Activated CD4-positive, alpha-beta T cell treated with anti-CD3 and anti-CD28 coated beads for 36 hours (primary cell): ENCODE measurements at regions of chr19 and their contacts with region 1.

Region 1: DNA sequence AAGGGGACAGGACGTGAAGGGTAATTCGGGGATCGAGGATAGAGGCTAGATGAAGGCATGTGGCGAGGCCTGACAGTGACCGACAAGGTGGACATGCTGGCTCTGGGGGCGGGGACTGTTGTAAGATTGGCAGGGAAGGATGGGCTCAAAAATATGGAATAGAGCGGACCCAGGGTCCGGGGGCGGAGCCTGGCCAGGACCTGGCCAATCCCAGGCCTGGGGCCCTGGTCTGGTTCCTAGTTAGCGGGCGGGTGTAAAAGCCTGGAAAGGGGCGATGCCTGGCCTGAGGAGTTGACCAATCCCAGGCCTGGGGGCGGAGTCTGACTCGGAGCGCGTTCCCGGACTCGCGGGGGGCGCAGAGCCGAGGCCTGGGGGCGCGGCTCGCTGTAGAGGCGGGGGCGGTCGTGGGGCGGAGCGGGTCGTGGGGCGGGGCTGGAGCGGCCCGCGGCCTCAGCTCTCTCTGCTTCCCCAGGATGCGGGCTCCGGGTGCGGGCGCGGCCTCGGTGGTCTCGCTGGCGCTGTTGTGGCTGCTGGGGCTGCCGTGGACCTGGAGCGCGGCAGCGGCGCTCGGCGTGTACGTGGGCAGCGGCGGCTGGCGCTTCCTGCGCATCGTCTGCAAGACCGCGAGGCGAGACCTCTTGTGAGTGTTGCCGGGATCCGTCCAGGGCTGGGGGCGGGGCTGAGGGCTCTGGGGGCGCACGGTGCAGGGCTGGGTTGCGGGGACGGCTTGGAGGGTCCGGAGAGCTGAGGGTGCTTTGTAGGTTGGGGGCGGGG is at the start of gene SLC27A1:
- DNase-seq: peak; percentile 93
- ATAC-seq: peak; percentile 90
- H3K4me3 Mint-ChIP-seq: peak within 1 kb of the TSS; percentile 86
- H3K27ac Mint-ChIP-seq: peak within 1 kb of the TSS; percentile 91
- H3K4me1 Mint-ChIP-seq: peaks cover 25% of the 10 kb centered on the region
- H3K27me3 Mint-ChIP-seq: no peaks in the 10 kb centered on the region
- total RNA-seq, gene SLC27A1: 2.2 to 2.7 TPM

Region 2: DNA sequence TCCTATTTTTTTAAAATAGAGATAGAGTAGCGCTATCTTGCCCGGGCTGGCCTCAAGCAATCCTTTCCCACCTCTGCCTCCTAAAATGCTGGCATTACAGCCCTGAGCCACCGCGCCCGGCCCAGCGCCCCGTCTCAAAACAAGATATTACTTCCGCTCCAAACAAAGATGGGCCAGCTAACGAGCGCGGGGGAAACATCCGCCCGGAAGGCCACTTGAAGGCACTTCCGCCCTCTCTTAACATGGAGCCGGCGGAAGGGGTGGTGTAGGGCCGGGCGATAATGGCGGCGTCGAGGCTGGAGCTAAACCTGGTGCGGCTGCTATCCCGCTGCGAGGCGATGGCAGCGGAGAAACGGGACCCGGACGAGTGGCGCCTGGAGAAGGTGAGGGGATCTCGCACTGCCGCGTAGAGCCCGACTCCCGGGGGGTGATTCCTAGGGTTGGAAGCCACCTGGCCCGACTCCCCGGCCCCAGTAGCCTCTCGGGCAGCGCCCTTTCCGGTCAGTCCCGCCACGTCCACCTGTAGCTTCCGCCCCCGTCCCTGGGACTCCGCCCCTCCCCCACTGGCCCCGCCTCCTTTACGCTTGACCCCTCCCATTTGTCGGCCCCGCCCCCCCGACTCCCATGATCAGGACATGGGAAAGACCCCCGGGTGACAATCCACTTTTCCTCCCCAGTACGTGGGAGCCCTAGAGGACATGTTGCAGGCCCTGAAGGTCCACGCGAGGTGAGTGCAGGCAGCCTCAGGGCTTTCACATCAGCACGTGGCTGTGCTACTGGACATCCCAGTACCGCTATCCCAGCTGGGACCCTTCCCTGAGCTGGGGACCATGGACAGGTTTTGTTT is 254.9 kb before region 1 on chr19 and contains the start of gene USE1:
- CTCF ChIA-PET with region 1: no interaction called
- POLR2A ChIA-PET with region 1: no interaction called
- intact Hi-C with region 1: no loop called
- DNase-seq: peak; percentile 93
- ATAC-seq: peak; percentile 97
- H3K4me3 Mint-ChIP-seq: peak within 1 kb of the TSS; percentile 80
- H3K27ac Mint-ChIP-seq: peak within 1 kb of the TSS; percentile 95
- H3K4me1 Mint-ChIP-seq: peaks cover 21% of the 10 kb centered on the region
- H3K27me3 Mint-ChIP-seq: no peaks in the 10 kb centered on the region
- total RNA-seq, gene USE1: 22.6 to 24.5 TPM

Region 3: DNA sequence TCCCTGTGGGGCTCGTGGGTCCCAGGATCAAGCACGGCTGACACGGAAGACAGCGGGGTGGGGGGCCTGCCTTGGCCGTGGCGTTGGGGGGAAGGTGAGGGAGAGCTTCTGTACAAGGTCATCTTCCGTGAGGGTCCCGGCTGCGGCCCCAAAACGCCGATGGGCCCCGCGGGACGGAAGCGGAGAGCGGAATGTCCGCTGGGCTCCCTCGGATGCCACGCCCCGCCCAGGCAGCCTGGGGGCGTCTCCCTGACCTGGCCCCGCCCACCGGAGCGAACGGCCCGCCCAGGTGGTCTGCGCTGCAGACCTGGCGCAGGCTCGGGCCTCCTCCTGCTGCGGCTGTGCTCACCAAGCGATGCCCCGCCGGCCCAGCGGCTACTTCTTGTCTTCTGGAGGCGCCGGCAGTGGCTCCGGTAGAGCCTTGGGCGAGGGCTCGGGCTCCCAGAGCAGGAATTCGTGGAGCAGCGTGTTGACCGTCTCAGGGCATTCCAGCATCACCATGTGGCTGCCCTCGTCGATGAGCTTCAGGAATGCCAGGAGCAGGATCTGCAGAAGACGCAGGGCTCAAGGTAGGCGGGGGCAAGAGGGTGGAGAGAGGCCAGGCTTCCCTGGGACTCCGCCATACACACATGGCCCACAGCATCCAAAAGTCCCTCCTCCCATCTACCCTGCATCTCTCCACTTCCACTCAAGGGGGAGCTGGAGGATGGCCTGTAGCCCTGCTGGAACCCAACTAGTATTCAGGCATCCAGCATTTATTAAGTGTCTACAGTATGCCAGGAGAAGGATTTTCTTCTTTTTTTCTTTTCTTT is 177.8 kb before region 1 on chr19:
- CTCF ChIA-PET with region 1: no interaction called
- POLR2A ChIA-PET with region 1: no interaction called
- intact Hi-C with region 1: loop called in 1 of 2 experiments (anchors 5 kb)
- DNase-seq: peak; percentile 90
- ATAC-seq: peak; percentile 98
- H3K4me3 Mint-ChIP-seq: peak overlapping the region; percentile 88
- H3K27ac Mint-ChIP-seq: peak overlapping the region; percentile 84
- H3K4me1 Mint-ChIP-seq: peaks cover 5% of the 10 kb centered on the region
- H3K27me3 Mint-ChIP-seq: no peaks in the 10 kb centered on the region

Region 4: GRCh38 chr19:17346109-17346671 is 124.1 kb before region 1 on chr19:
- CTCF ChIA-PET with region 1: interaction called, 4 read pairs
- POLR2A ChIA-PET with region 1: no interaction called
- intact Hi-C with region 1: loop called (anchors 1 kb)
- DNase-seq: peak; percentile 90
- ATAC-seq: peak; percentile 99
- H3K4me3 Mint-ChIP-seq: no peak overlapping the region
- H3K27ac Mint-ChIP-seq: no peak overlapping the region
- H3K4me1 Mint-ChIP-seq: peaks cover 4% of the 10 kb centered on the region
- H3K27me3 Mint-ChIP-seq: peaks cover 12% of the 10 kb centered on the region

Region 5: DNA sequence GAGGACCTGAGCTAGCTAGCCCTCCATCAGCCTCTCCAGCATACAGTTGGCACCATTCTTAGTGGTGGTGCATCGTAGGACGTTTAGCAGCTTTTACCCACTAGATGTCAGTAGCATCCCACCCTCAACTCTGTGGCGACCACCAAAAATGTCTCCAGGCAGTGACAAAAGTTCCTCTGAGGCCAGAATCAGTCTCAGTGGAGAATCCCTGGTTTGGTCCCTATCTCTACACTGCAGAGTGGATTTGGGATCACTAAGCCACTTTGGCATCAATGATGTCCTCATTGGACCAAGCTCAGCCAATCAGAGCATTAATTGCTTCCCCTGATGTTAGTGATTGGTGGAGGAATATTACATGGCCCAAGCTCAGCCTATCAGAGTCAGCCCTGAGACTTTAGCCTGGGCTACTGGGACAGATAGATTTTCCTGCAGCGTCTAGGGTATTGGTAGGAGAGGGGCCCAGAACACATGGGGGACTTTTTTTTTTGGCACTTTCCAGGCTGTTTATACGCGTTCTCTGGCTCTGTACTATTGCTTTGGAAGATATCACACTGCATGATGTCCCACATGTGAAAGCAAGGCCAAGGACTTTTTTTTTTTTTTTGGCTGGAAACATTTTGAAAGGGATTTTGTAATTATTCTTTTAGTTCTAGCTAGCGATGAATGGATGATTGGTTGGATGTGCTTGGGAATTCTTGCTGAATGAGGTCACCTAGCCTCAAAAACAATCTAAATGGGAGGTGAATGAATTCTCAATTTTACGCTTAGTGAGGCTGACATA is 28.8 kb before region 1 on chr19:
- CTCF ChIA-PET with region 1: interaction called, 9 read pairs
- POLR2A ChIA-PET with region 1: no interaction called
- intact Hi-C with region 1: loop called (anchors 1 kb)
- DNase-seq: peak; percentile 41
- ATAC-seq: peak; percentile 84
- H3K4me3 Mint-ChIP-seq: no peak overlapping the region
- H3K27ac Mint-ChIP-seq: no peak overlapping the region
- H3K4me1 Mint-ChIP-seq: no peaks in the 10 kb centered on the region
- H3K27me3 Mint-ChIP-seq: no peaks in the 10 kb centered on the region

Region 6: GRCh38 chr19:17539238-17540117 is 69.2 kb after region 1 on chr19:
- CTCF ChIA-PET with region 1: no interaction called
- POLR2A ChIA-PET with region 1: no interaction called
- intact Hi-C with region 1: loop called in 1 of 2 experiments (anchors 1 kb)
- DNase-seq: peak; percentile 99
- ATAC-seq: peak; percentile 94
- H3K4me3 Mint-ChIP-seq: peak overlapping the region; percentile 71
- H3K27ac Mint-ChIP-seq: peak overlapping the region; percentile 47
- H3K4me1 Mint-ChIP-seq: peaks cover 10% of the 10 kb centered on the region
- H3K27me3 Mint-ChIP-seq: peaks cover 6% of the 10 kb centered on the region

Region 7: GRCh38 chr19:17747205-17748098 is 277.2 kb after region 1 on chr19:
- CTCF ChIA-PET with region 1: no interaction called
- POLR2A ChIA-PET with region 1: no interaction called
- intact Hi-C with region 1: loop called in 1 of 2 experiments (anchors 1 kb)
- DNase-seq: peak; percentile 98
- ATAC-seq: peak; percentile 90
- H3K4me3 Mint-ChIP-seq: peak overlapping the region; percentile 76
- H3K27ac Mint-ChIP-seq: peak overlapping the region; percentile 60
- H3K4me1 Mint-ChIP-seq: peaks cover 42% of the 10 kb centered on the region
- H3K27me3 Mint-ChIP-seq: no peaks in the 10 kb centered on the region